Thyroid gland (tissue), 4 donors: ENCODE measurements at regions of chr5 and their contacts with region 1.

Region 1: GRCh38 chr5:442335-443238 is at the start of gene EXOC3:
- DNase-seq: peak; percentile 65 to 70
- H3K4me3 ChIP-seq: peak within 1 kb of the TSS; percentile 14 to 80 (median 54)
- H3K27ac ChIP-seq: peak within 1 kb of the TSS in 2 of 3 donors; percentile 19 to 42
- H3K4me1 ChIP-seq: peaks cover 13 to 14% of the 10 kb centered on the region in 2 donors
- H3K27me3 ChIP-seq: no peaks in the 10 kb centered on the region
- CTCF ChIP-seq: no peak
- POLR2A ChIP-seq: peak in 1 of 2 donors; percentile 73
- total RNA-seq, gene EXOC3: 39.7 to 49.6 (median 45.0) TPM

Region 2: GRCh38 chr5:528625-529511 is 86.3 kb after region 1 on chr5:
- intact Hi-C with region 1: no loop called
- DNase-seq: no peak
- H3K4me3 ChIP-seq: no peak overlapping the region
- H3K27ac ChIP-seq: no peak overlapping the region
- H3K4me1 ChIP-seq: peaks cover 15 to 24% of the 10 kb centered on the region in 2 donors
- H3K27me3 ChIP-seq: peaks cover 24% of the 10 kb centered on the region
- CTCF ChIP-seq: no peak
- POLR2A ChIP-seq: no peak

Region 3: DNA sequence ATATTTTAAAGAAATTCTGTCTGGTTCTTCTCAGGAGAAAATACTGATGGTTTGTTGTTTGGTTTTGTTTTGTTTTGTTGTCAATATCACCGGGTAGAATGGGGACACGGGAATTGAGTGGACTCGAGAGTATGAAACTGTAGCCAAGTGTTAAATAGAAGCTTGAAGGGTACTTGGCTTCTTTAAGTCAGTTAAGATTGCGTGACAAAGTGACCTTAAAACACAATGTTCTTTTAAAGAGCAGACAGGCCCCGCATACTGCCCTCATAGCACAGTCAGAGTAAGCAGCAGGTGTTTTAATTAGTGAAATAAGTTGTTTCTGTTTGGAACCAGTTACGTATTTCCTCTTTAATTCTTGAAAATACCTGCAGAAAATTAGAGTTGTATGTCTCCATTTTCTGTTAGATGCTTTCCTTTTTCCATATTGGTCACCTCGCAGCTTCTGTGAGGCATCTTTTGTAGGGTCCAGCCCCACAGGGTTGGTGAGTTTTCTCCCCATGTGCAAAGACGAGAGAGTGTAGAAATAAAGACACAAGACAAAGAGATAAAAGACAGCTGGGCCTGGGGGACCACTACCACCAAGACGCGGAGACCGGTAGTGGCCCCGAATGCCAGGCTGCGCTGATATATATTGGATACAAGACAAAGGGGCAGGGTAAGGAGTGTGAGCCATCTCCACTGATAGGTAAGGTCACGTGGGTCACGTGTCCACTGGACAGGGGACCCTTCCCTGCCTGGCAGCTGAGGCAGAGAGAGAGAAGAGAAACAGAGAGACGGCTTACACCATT is 459.7 kb after region 1 on chr5:
- intact Hi-C with region 1: loop called (anchors 10 kb)
- DNase-seq: peak in 1 of 2 donors; percentile 12
- H3K4me3 ChIP-seq: no peak overlapping the region
- H3K27ac ChIP-seq: no peak overlapping the region
- H3K4me1 ChIP-seq: peaks cover 0 to 7% of the 10 kb centered on the region in 2 donors
- H3K27me3 ChIP-seq: no peaks in the 10 kb centered on the region
- CTCF ChIP-seq: no peak
- POLR2A ChIP-seq: no peak